Psoas muscle (tissue), 8 donors: ENCODE measurements at regions of chr19 and their contacts with region 1.

Region 1: GRCh38 chr19:14479975-14480699 is 5.0 kb upstream of the PTGER1 start:
- DNase-seq: peak in 1 of 2 donors; percentile 35
- ATAC-seq: peak; percentile 22 to 59 (median 43)
- H3K4me3 ChIP-seq: no peak overlapping the region
- H3K27ac ChIP-seq: no peak overlapping the region
- H3K4me1 ChIP-seq: no peaks in the 10 kb centered on the region
- H3K27me3 ChIP-seq: peaks cover 0 to 15% (median 10%) of the 10 kb centered on the region in 3 donors
- CTCF ChIP-seq: peak; percentile 56

Region 2: GRCh38 chr19:14147797-14148605 is 332.1 kb before region 1 on chr19:
- intact Hi-C with region 1: loop called in 1 of 2 experiments (anchors 10 kb)
- DNase-seq: peak; percentile 72 to 84
- ATAC-seq: peak; percentile 76 to 88 (median 84)
- H3K4me3 ChIP-seq: no peak overlapping the region
- H3K27ac ChIP-seq: peak overlapping the region; percentile 41
- H3K4me1 ChIP-seq: peaks cover 9% of the 10 kb centered on the region
- H3K27me3 ChIP-seq: no peaks in the 10 kb centered on the region
- CTCF ChIP-seq: peak; percentile 72

Region 3: DNA sequence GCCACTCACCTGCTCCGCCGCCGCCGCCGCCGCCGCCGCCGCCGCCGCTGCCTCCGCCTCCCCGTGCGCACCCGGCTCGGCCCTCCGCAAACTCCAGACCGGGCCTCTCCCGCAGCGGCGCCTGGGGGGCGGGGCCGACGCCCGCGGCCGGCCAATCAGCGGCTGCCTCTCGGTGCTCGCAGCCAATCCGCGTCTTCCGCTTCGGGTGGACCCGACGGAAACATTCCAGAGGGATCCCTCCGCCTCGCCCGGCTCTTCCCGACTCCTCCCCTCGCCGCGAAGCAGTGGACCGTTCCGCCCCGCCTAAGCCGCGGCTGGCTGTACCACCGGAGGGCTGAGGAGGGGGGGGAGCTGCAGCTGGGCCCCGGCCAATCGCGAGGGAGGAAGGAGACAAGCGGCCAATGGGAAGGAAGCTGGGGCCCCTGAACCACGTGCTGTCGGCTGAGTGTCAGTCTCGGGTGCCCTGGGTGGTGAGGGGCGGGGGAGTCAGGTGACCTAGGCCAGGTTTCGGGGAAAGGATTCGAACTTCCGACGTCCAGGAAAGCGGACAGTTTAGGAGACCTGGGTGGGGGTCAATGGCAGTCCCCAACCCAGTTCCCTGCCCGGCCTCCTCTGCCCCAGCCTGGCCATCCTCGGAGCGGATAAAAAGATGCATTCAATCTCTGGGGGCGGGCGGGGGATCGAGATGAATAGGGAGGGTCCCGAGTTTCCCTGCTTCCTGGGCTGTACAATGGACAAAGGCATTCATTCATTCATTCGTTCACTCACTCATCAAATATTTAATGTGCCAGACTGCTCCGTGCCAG is 16.1 kb after region 1 on chr19 and contains the start of gene GIPC1:
- intact Hi-C with region 1: no loop called
- DNase-seq: peak; percentile 97 to 98
- ATAC-seq: peak; percentile 97 to 98 (median 97)
- H3K4me3 ChIP-seq: peak within 1 kb of the TSS; percentile 84
- H3K27ac ChIP-seq: peak within 1 kb of the TSS; percentile 37
- H3K4me1 ChIP-seq: peaks cover 11% of the 10 kb centered on the region
- H3K27me3 ChIP-seq: no peaks in the 10 kb centered on the region
- CTCF ChIP-seq: no peak
- total RNA-seq, gene GIPC1: 37.9 to 45.3 (median 43.2) TPM